HCT116 (cell line): ENCODE measurements at regions of chr2 and their contacts with region 1.

Region 1: GRCh38 chr2:199443589-199444130 is 14.1 kb downstream of the SATB2 start:
- DNase-seq: no peak
- ATAC-seq: no peak
- H3K4me3 ChIP-seq: no peak overlapping the region
- H3K27ac ChIP-seq: no peak overlapping the region
- H3K4me1 ChIP-seq: peaks cover 0 to 3% of the 10 kb centered on the region in 2 experiments; a peak in 2 of 4 replicates
- H3K27me3 ChIP-seq: no peaks in the 10 kb centered on the region
- CTCF ChIP-seq: no peak
- POLR2A ChIP-seq: no peak
- RAD21 ChIP-seq: no peak

Region 2: DNA sequence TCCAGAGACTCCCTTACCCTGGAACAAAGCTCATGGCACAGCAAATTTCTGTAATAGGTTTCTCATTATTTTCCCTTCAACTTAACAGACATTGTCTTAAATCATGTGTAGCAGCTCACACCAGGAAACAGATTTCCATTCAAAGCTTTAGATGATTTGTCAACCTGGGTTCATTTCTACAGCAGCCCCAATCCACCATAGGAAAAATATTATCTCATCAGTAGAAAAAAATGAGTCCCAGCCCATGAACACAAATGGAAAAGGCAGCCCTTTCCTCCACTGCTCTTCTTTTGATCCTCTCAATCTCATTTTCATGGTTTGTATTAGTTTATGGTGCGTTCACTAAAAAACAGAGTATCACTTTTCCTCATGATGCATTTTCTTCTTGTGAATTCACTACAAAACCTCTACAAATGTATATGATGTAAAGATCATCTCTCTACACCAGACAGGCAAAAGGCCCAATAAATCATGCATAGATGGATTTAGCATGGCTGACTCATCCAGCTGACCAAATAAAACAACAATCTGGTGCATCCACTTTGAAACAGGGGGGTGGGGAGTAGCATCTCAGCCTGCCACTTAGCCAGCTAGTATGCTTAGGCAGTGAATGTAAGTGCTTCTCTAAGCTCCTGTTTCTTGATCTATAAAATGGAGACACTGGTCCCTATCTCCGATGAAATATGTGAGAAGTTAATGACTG is 64.6 kb before region 1 on chr2:
- CTCF ChIA-PET with region 1: no interaction called
- POLR2A ChIA-PET with region 1: no interaction called
- RAD21 ChIA-PET with region 1: no interaction called
- intact Hi-C with region 1: loop called (anchors 2 kb)
- DNase-seq: no peak
- ATAC-seq: no peak
- H3K4me3 ChIP-seq: no peak overlapping the region
- H3K27ac ChIP-seq: no peak overlapping the region
- H3K4me1 ChIP-seq: peaks cover 0 to 3% of the 10 kb centered on the region in 2 experiments; a peak in 2 of 4 replicates
- H3K27me3 ChIP-seq: no peaks in the 10 kb centered on the region
- CTCF ChIP-seq: no peak
- POLR2A ChIP-seq: no peak
- RAD21 ChIP-seq: no peak